IMR-90 (cell line): ENCODE measurements at regions of chr6 and their contacts with region 1.

Region 1: GRCh38 chr6:85642774-85643536 is at the start of gene SYNCRIP:
- DNase-seq: peak; percentile 97
- ATAC-seq: peak; percentile 87
- H3K4me3 ChIP-seq: peak within 1 kb of the TSS; percentile 95
- H3K27ac ChIP-seq: peak within 1 kb of the TSS; percentile 98
- H3K4me1 ChIP-seq: peaks cover 4% of the 10 kb centered on the region; the same call in 1 of the 2 replicates
- H3K27me3 ChIP-seq: no peaks in the 10 kb centered on the region
- CTCF ChIP-seq: no peak
- POLR2A ChIP-seq: peak; percentile 93
- RAD21 ChIP-seq: no peak
- total RNA-seq, gene SYNCRIP: 59.3 and 120 TPM in 2 replicates

Region 2: DNA sequence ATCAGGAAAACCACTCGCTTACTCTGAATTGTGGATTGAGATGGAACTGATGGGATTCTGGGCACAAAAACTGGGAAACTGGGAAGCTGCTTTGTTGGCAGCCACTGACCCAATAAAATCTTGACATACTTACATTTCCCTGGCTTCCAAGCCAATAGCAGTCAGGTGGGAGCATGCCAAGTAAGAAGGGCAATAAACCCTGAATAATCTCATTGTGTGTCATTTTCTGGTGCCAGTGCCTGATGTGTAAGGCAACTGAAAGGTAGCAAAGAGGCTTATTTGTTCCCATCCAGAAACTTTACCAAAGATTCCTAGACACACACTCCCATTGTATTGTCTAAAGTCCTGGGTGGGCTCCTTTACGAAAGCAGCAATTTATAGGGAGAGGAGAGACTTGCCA is 971.8 kb before region 1 on chr6:
- CTCF ChIA-PET with region 1: no interaction called
- POLR2A ChIA-PET with region 1: no interaction called
- dilution Hi-C with region 1: no loop called
- in situ Hi-C with region 1: no loop called
- intact Hi-C with region 1: no loop called
- DNase-seq: no peak
- ATAC-seq: no peak
- H3K4me3 ChIP-seq: no peak overlapping the region
- H3K27ac ChIP-seq: no peak overlapping the region
- H3K4me1 ChIP-seq: no peaks in the 10 kb centered on the region
- H3K27me3 ChIP-seq: no peaks in the 10 kb centered on the region
- CTCF ChIP-seq: no peak
- POLR2A ChIP-seq: no peak
- RAD21 ChIP-seq: no peak

Region 3: GRCh38 chr6:85660181-85660611 is 17.2 kb after region 1 on chr6:
- CTCF ChIA-PET with region 1: no interaction called
- POLR2A ChIA-PET with region 1: interaction called, 4 read pairs
- dilution Hi-C with region 1: no loop called
- in situ Hi-C with region 1: no loop called
- intact Hi-C with region 1: loop called (anchors 2 kb)
- DNase-seq: peak; percentile 98
- ATAC-seq: peak; percentile 100
- H3K4me3 ChIP-seq: peak overlapping the region; percentile 2; the same call in 1 of the 2 replicates
- H3K27ac ChIP-seq: peak overlapping the region; percentile 68
- H3K4me1 ChIP-seq: peaks cover 2% of the 10 kb centered on the region; the same call in 1 of the 2 replicates
- H3K27me3 ChIP-seq: no peaks in the 10 kb centered on the region
- CTCF ChIP-seq: peak; percentile 26; the same call in 1 of the 2 replicates
- POLR2A ChIP-seq: peak; percentile 71
- RAD21 ChIP-seq: peak; percentile 6; the same call in 1 of the 2 replicates

Region 4: DNA sequence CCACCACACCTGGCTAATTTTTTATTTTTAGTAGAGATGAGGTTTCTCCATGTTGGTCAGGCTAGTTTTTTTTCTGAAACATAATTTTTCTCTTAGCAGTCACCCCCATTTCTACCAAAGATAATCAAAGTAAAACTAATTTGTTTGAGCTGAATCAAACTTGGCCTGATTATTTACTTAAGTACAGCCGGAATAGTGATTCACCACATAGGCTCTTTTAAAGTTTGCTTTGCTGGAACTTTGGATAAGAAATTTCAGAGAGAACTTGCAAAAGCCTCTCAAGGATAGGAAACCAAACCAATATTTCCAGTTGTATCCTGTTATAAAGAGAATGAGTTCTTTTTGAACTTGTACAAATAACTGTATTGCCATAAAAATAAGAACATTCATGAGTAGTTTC is 104.7 kb after region 1 on chr6:
- CTCF ChIA-PET with region 1: no interaction called
- POLR2A ChIA-PET with region 1: no interaction called
- dilution Hi-C with region 1: no loop called
- in situ Hi-C with region 1: no loop called
- intact Hi-C with region 1: loop called (anchors 2 kb)
- DNase-seq: peak; percentile 84
- ATAC-seq: peak; percentile 79
- H3K4me3 ChIP-seq: no peak overlapping the region
- H3K27ac ChIP-seq: peak overlapping the region; percentile 87
- H3K4me1 ChIP-seq: peaks cover 2% of the 10 kb centered on the region; the same call in 1 of the 2 replicates
- H3K27me3 ChIP-seq: no peaks in the 10 kb centered on the region; the same call in 1 of the 2 replicates
- CTCF ChIP-seq: no peak
- POLR2A ChIP-seq: no peak
- RAD21 ChIP-seq: no peak